Upper lobe of right lung (tissue), 1 donor: ENCODE measurements at regions of chr11 and their contacts with region 1.

Region 1: GRCh38 chr11:12043959-12044819 is 35.8 kb upstream of the DKK3 start:
- DNase-seq: peak; percentile 94
- ATAC-seq: peak; percentile 81
- H3K4me3 ChIP-seq: no peak overlapping the region
- H3K27ac ChIP-seq: peak overlapping the region; percentile 75
- H3K4me1 ChIP-seq: peaks cover 21% of the 10 kb centered on the region
- H3K27me3 ChIP-seq: no peaks in the 10 kb centered on the region
- CTCF ChIP-seq: peak; percentile 89

Region 2: GRCh38 chr11:11806586-11806985 is 237.6 kb before region 1 on chr11:
- intact Hi-C with region 1: loop called (anchors 10 kb)
- DNase-seq: no peak
- ATAC-seq: no peak
- H3K4me3 ChIP-seq: no peak overlapping the region
- H3K27ac ChIP-seq: no peak overlapping the region
- H3K4me1 ChIP-seq: peaks cover 12% of the 10 kb centered on the region
- H3K27me3 ChIP-seq: no peaks in the 10 kb centered on the region
- CTCF ChIP-seq: no peak

Region 3: GRCh38 chr11:11916981-11917399 is 127.2 kb before region 1 on chr11:
- intact Hi-C with region 1: loop called (anchors 10 kb)
- DNase-seq: no peak
- ATAC-seq: no peak
- H3K4me3 ChIP-seq: no peak overlapping the region
- H3K27ac ChIP-seq: no peak overlapping the region
- H3K4me1 ChIP-seq: no peaks in the 10 kb centered on the region
- H3K27me3 ChIP-seq: no peaks in the 10 kb centered on the region
- CTCF ChIP-seq: no peak

Region 4: DNA sequence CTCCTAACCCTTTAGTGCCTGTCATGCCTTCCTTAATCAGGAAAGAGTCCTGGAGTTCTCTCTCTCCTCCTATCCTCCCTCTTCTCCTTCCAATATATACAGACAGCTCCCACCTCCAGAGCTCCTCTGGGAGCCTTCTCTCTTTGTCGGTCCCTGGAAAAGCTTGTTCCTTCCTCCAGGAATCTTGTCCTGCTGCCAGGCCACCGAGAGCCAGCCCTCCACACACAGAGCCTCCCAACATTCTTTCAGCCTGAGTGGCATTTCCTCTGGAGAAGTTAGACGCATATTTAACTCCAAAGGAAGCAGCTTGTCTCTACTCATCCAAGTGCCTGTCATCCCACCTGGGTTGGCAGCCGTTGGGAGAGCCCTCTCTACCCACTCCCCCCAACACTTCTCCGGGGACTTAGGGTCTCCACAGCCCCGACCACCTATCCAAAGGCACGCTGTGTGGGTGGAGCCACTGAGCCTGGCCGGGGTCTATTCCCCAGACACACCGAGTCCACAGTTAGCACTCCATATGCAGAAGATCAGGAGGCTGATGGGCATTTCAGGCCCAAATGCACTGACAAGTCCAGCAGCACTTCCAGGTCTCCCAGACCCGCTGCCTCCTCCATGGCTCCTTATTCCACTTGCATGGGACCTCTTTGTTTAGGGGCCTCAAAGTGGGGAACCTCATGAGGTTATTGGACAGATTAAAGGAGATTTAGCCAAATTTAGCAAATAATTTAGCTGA is 66.8 kb before region 1 on chr11:
- intact Hi-C with region 1: no loop called
- DNase-seq: peak; percentile 65
- ATAC-seq: peak; percentile 51
- H3K4me3 ChIP-seq: no peak overlapping the region
- H3K27ac ChIP-seq: peak overlapping the region; percentile 72
- H3K4me1 ChIP-seq: peaks cover 87% of the 10 kb centered on the region
- H3K27me3 ChIP-seq: no peaks in the 10 kb centered on the region
- CTCF ChIP-seq: no peak

Region 5: DNA sequence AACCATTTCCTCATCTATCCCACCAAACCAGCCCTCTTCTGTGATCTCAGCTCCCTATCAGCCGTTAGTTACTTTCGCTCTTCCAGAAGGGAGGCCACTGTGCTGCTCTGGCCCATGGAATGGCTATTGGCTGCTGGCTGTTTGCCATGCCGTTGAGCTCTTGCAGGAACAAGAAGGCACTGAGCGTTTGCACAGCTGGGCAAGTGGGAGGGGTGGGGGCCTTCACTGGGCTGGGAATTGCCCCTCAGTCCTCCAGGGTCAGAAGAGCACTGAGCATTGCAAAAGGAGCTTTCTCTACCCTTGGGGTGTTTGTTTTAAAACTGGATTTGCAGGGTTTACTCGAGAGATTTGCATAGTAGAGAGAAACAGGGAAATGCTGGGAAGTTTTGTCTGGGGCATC is 204.1 kb after region 1 on chr11:
- intact Hi-C with region 1: loop called (anchors 10 kb)
- DNase-seq: peak; percentile 97
- ATAC-seq: peak; percentile 91
- H3K4me3 ChIP-seq: no peak overlapping the region
- H3K27ac ChIP-seq: peak overlapping the region; percentile 53
- H3K4me1 ChIP-seq: peaks cover 19% of the 10 kb centered on the region
- H3K27me3 ChIP-seq: no peaks in the 10 kb centered on the region
- CTCF ChIP-seq: no peak